Activated T-helper 2 cell treated with anti-CD3 and anti-CD28 coated beads, Interferon-gamma antibody, Interleukin-2, Interleukin-4, amounts not matched to agents 10 μg/mL and 5 μg/mL and 100 μg/mL, durations not matched to agents 14 hours and 24 hours and 36 hours (primary cell): ENCODE measurements at regions of chr11 and their contacts with region 1.

Region 1: DNA sequence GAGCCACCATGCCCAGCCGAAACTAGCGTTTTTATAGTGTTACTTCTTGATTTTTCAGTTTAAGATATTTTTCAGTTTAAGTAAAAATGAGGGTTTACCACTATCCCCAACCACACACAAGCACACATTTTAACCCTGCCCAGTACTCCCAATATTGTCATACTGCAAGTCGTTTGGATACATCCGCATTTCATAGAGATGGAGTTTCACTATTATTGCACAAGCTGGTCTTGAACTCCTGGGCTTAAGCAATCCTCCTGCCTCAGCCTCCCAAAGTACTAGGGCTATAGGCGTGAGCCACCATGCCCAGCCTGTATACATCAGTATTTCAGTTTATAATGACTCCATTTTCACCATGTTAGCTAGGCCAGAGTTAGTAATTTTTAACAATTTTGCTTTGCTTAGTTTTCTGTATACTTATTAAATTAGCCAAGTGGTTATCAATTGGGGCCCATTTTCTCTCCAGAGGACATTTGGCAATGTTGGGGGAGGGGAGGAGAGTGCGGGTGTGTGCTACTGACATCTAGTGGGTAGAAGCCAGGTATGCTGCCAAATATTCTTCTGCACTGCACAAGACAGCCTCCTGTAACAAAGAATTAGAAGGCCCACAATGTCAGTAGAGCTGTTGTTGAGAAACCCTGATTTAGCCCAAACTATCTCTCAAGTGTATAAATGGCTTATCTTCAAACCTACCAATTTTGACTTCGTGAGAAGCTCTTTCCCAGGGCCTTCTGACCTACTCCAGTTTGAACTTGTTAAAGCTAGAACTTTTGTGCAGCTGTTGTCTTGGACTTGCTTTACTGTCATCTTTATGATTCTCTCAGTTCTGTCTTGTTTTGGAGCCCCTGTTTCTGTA is 7.3 kb downstream of the USP47 start:
- DNase-seq: peak; percentile 54
- H3K4me3 Mint-ChIP-seq: no peak overlapping the region
- H3K27ac Mint-ChIP-seq: peak overlapping the region; percentile 0
- H3K4me1 Mint-ChIP-seq: peaks cover 41% of the 10 kb centered on the region
- H3K27me3 Mint-ChIP-seq: no peaks in the 10 kb centered on the region

Region 2: DNA sequence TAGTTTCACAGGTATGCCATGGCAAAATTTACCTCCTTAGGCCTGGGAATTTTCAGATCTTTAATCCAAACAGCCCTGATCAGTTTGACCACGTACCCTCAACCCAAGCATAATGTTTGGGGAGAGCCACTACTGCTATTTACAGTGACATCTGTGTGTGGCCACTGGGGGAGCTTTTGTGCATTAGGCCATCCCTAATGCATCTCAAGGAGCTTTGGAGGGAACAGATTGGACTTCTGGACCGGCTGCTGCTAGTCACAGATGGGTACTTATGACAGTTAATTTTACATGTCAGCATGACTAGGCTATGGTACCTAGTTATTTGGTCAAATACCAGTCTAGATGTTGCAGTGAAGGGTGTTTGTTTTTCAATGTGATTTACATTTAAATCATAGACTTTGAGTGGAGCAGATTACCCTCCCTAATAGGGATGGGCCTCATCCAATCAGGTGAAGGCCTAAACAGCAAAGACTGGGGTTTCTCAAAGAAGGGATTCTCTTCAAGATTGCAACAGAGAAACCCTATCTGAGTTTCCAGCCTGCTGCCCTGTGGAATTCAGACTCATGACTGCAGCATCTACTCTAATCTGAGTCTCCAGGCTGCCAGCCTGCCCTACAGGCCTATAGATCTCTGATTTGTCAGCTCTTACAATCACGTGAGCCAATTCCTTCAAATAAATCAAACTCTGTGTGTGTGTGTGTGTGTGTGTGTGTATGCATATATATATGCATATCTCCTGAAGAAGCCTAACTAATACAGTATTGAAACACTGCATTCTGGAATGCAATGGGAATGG is 189.4 kb before region 1 on chr11:
- intact Hi-C with region 1: no loop called
- DNase-seq: no peak
- H3K4me3 Mint-ChIP-seq: no peak overlapping the region
- H3K27ac Mint-ChIP-seq: no peak overlapping the region
- H3K4me1 Mint-ChIP-seq: no peaks in the 10 kb centered on the region
- H3K27me3 Mint-ChIP-seq: peaks cover 31% of the 10 kb centered on the region

Region 3: GRCh38 chr11:11672789-11673188 is 176.3 kb before region 1 on chr11:
- intact Hi-C with region 1: no loop called
- DNase-seq: no peak
- H3K4me3 Mint-ChIP-seq: no peak overlapping the region
- H3K27ac Mint-ChIP-seq: no peak overlapping the region
- H3K4me1 Mint-ChIP-seq: no peaks in the 10 kb centered on the region
- H3K27me3 Mint-ChIP-seq: peaks cover 5% of the 10 kb centered on the region

Region 4: GRCh38 chr11:11760838-11761237 is 88.3 kb before region 1 on chr11:
- intact Hi-C with region 1: no loop called
- DNase-seq: no peak
- H3K4me3 Mint-ChIP-seq: no peak overlapping the region
- H3K27ac Mint-ChIP-seq: no peak overlapping the region
- H3K4me1 Mint-ChIP-seq: no peaks in the 10 kb centered on the region
- H3K27me3 Mint-ChIP-seq: peaks cover 9% of the 10 kb centered on the region

Region 5: GRCh38 chr11:11787305-11788062 is 61.6 kb before region 1 on chr11:
- intact Hi-C with region 1: loop called (anchors 2 kb)
- DNase-seq: peak; percentile 37
- H3K4me3 Mint-ChIP-seq: no peak overlapping the region
- H3K27ac Mint-ChIP-seq: no peak overlapping the region
- H3K4me1 Mint-ChIP-seq: no peaks in the 10 kb centered on the region
- H3K27me3 Mint-ChIP-seq: peaks cover 3% of the 10 kb centered on the region

Region 6: DNA sequence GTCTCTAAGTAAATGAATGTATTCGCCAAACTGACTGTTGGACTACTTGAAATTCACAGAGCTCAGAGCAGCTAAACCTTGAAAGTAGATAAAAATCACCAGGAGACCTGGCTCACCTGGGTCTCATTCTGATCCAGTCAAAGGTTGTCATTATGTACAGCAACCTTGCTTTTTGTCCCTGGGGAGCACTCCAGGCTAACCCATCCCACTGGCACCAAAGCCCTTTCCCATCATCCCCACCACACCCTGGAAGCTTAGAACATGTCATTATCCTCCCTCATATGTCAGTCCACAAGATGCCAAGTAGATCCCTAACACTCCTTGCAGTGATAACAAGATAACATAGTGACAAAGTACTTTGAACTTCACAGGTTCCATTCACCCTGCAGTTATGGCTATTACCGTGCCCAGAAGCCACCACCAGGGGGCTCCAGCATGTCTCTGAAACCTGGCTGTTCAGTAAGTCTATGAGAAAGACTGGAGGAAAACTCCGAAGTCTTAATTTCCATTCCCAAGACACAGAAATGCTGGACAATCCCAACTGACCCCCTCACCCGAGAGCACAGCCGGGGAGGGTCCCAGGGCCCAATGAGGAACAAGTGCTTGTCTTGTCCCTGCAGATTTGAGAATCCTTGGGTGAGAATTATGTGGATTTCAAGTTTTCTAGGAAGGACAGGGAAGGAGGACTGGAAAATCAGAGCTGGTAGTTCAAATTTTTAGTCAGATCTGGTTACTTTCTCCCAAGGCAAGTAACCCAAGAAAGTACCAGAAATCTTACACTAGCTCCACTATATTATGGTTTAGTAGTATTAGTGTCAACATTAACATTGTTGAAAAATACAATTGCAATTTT is 50.3 kb before region 1 on chr11:
- intact Hi-C with region 1: loop called (anchors 2 kb)
- DNase-seq: peak; percentile 31
- H3K4me3 Mint-ChIP-seq: no peak overlapping the region
- H3K27ac Mint-ChIP-seq: no peak overlapping the region
- H3K4me1 Mint-ChIP-seq: no peaks in the 10 kb centered on the region
- H3K27me3 Mint-ChIP-seq: peaks cover 33% of the 10 kb centered on the region

Region 7: DNA sequence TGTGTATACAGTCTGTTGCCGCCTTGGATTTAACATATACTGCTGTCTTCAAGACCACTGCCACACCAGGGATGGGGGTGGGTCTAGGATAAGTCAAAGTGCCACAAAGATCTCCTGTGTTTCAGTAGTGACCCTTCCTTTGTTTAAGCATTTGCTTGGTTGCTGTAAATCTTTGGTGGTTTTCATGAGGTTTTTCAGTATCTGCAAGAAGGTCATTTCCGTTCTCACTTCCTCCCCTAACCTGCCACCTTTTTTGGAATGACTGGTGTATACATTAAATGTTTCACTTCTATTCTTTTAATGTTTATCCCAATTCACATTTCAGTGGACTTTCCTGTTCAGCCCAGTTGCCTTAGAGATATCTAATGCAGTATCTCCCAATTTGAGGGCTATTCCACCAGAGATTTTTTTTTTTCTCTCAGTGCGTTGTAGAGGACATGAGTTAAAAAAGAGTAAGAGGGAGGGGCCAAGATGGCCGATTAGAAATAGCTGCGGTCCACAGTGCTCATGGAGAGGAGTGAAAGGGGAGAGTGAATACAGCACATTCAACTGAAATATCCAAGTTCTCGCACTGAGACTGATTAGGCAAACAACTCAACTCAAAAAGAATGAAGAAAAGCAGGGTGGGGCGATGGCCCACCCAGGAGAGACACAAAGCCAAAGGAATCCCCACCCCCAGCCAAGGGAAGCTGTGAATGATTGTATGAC is 35.8 kb after region 1 on chr11:
- intact Hi-C with region 1: loop called (anchors 5 kb)
- DNase-seq: no peak
- H3K4me3 Mint-ChIP-seq: no peak overlapping the region
- H3K27ac Mint-ChIP-seq: peak overlapping the region; percentile 0
- H3K4me1 Mint-ChIP-seq: peaks cover 35% of the 10 kb centered on the region
- H3K27me3 Mint-ChIP-seq: no peaks in the 10 kb centered on the region

Region 8: DNA sequence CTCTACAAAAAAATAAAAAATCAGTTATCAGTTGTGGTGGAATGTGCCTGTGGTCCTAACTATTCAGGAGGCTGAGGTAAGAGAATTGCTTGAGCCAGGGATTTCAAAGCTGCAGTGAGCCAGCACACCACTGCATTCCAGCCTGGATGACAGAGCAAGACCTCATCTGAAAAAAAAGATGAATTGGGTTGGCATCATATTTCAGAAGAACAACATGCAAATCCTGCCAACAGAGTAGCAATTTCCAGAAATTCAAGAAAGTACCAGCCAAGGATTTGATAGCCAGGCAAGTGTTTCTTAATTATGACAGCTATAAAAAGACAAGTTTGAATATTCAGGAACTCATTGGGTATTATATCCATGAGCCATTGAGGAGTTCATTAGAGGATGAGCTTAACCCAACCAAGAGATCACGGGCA is 67.9 kb after region 1 on chr11:
- intact Hi-C with region 1: no loop called
- DNase-seq: no peak
- H3K4me3 Mint-ChIP-seq: no peak overlapping the region
- H3K27ac Mint-ChIP-seq: no peak overlapping the region
- H3K4me1 Mint-ChIP-seq: no peaks in the 10 kb centered on the region
- H3K27me3 Mint-ChIP-seq: no peaks in the 10 kb centered on the region

Region 9: DNA sequence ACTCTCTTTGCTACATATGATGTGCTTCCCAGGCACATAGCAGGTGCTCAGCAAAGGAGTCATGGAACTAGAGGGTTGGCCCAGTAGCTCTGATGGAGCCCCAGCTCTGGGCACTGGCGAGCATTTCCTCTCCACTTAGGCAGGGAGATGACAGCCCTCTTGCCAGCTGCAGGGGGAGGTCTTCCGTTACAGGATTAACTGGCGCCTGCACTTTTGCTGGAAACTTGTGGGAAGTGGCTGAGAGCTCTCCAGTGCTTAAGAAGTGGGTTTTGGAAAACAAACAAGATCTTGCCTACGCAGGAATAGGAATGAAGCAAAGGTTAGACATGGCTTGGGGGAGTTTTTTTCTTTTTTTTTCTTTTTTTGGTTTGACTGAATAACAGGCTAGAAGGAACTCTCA is 336.8 kb after region 1 on chr11:
- intact Hi-C with region 1: loop called (anchors 5 kb)
- DNase-seq: no peak
- H3K4me3 Mint-ChIP-seq: no peak overlapping the region
- H3K27ac Mint-ChIP-seq: peak overlapping the region; percentile 44
- H3K4me1 Mint-ChIP-seq: peaks cover 71% of the 10 kb centered on the region
- H3K27me3 Mint-ChIP-seq: no peaks in the 10 kb centered on the region